PC-3 (cell line): ENCODE measurements at regions of chr2 and their contacts with region 1.

Region 1: GRCh38 chr2:150811259-150811855 is 323.9 kb upstream of the RND3 start:
- DNase-seq: peak; percentile 17
- ATAC-seq: no peak
- H3K4me3 ChIP-seq: no peak overlapping the region
- H3K27ac ChIP-seq: peak overlapping the region; percentile 88; the same call in 1 of the 2 replicates
- H3K4me1 ChIP-seq: peaks cover 20% of the 10 kb centered on the region
- H3K27me3 ChIP-seq: no peaks in the 10 kb centered on the region
- CTCF ChIP-seq: no peak

Region 2: DNA sequence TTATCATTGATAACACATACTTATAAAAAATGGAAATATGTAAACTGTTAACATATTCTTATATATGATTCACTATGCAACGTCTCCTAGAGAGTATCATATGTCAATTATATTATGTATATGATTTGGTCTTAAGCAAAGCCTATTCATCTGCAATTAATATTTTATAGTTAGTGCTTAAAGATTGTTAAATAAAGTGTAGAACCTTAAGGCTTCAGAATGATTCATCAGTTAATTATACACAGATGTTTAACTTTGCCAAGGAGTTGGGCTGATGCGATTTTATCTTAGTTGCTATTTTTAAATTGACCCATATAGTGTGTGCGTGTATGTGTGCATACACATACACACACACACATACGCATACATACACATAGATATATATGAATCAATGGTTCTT is 127.2 kb after region 1 on chr2:
- CTCF ChIA-PET with region 1: no interaction called
- POLR2A ChIA-PET with region 1: no interaction called
- intact Hi-C with region 1: loop called (anchors 2 kb)
- DNase-seq: peak; percentile 33
- ATAC-seq: peak; percentile 72
- H3K4me3 ChIP-seq: no peak overlapping the region
- H3K27ac ChIP-seq: no peak overlapping the region
- H3K4me1 ChIP-seq: peaks cover 17% of the 10 kb centered on the region
- H3K27me3 ChIP-seq: no peaks in the 10 kb centered on the region
- CTCF ChIP-seq: no peak

Region 3: DNA sequence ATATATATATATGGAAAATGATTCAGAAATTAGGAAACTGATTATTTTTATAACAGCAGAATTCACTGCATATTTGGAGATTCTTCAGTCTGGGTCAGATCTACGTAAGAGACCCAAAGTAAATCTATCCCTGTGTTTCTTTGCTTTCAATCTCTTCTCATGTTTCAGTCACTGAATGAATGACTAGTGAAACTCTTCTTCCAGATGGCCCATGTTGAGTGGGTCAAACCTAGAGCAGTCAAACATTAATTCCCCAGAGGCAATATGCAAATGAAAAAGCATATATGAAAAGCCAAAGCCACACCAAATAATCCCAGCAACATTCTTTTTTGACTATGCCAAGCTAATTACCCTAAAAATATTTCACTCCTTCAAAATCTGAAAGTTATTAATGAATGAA is 133.0 kb after region 1 on chr2:
- CTCF ChIA-PET with region 1: no interaction called
- POLR2A ChIA-PET with region 1: no interaction called
- intact Hi-C with region 1: loop called (anchors 2 kb)
- DNase-seq: no peak
- ATAC-seq: no peak
- H3K4me3 ChIP-seq: no peak overlapping the region
- H3K27ac ChIP-seq: no peak overlapping the region
- H3K4me1 ChIP-seq: no peaks in the 10 kb centered on the region
- H3K27me3 ChIP-seq: no peaks in the 10 kb centered on the region
- CTCF ChIP-seq: no peak

Region 4: GRCh38 chr2:151161821-151162551 is 350.6 kb after region 1 on chr2:
- CTCF ChIA-PET with region 1: no interaction called
- POLR2A ChIA-PET with region 1: no interaction called
- intact Hi-C with region 1: loop called (anchors 10 kb)
- DNase-seq: peak; percentile 51
- ATAC-seq: peak; percentile 70
- H3K4me3 ChIP-seq: no peak overlapping the region
- H3K27ac ChIP-seq: no peak overlapping the region
- H3K4me1 ChIP-seq: no peaks in the 10 kb centered on the region
- H3K27me3 ChIP-seq: no peaks in the 10 kb centered on the region
- CTCF ChIP-seq: peak; percentile 60